MCF 10A (cell line): ENCODE measurements at regions of chr16 and their contacts with region 1.

Region 1: DNA sequence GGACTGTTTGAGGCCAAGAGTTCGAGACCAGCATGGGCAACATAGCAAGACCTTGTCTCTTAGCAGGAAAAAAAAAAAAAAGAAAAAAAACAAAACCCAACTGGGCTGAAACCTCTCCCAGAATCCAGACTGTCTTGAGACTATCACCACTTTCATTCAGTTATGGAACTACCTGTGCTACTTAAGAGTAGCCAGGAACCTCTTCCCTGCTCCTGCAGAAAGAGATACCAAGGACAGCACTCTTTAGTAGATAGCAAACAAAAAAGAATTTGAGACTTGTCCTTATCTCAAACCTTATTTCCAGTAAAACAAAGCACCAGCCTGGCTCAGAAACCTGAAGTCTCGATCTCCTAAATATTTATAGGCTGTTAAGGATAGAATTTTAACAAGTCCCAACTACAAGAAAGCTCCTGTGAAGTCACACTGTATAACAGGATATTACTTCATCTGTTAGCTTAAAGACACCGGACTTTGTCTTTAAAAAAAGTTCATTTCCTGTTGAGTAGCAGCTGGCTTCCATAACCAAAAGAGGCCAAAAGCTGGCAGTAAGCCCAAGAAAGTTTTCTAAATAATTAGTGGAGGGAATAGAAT is 5.1 kb downstream of the CDR2 start:
- DNase-seq: peak; percentile 30
- H3K4me3 Mint-ChIP-seq: no peak overlapping the region
- H3K27ac Mint-ChIP-seq: peak overlapping the region; percentile 33
- H3K4me1 Mint-ChIP-seq: peaks cover 35% of the 10 kb centered on the region
- H3K27me3 Mint-ChIP-seq: no peaks in the 10 kb centered on the region
- CTCF ChIP-seq: no peak

Region 2: DNA sequence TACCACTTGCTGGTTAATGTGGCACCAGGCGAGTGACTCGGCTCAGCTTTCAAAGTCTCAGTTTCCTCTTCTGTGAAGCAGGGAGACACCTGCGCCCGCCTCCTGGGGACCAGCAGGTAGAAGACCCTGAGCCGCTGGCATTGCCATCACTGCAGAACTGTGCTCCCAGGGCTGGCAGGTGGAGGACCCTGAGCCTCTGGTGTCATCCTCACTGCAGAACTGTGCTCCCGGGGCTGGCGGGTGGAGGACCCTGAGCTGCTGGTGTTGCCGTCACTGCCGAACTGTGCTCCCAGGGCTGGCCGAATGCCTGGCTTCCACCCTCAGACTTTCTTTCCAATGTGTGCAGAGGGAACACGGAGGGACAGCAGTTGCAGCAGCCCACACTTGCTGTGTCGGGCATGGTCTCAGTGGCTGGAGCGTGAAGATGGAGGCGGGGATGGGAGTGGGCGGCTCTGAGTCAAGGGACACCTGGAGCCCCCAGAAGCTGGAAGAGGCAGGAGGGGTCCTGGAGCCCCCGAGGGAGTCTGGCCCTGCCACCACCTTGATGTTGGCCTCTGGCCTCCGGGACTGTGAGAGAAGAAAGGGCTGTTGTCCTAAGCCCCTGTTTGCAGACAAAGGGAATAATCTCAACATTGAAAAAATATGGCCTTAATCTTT is 845.8 kb before region 1 on chr16:
- CTCF ChIA-PET with region 1: no interaction called
- POLR2A ChIA-PET with region 1: no interaction called
- intact Hi-C with region 1: no loop called
- DNase-seq: no peak
- H3K4me3 Mint-ChIP-seq: no peak overlapping the region
- H3K27ac Mint-ChIP-seq: no peak overlapping the region
- H3K4me1 Mint-ChIP-seq: no peaks in the 10 kb centered on the region
- H3K27me3 Mint-ChIP-seq: no peaks in the 10 kb centered on the region
- CTCF ChIP-seq: no peak

Region 3: GRCh38 chr16:21574381-21574780 is 794.9 kb before region 1 on chr16:
- CTCF ChIA-PET with region 1: no interaction called
- POLR2A ChIA-PET with region 1: no interaction called
- intact Hi-C with region 1: no loop called
- DNase-seq: no peak
- H3K4me3 Mint-ChIP-seq: no peak overlapping the region
- H3K27ac Mint-ChIP-seq: no peak overlapping the region
- H3K4me1 Mint-ChIP-seq: no peaks in the 10 kb centered on the region
- H3K27me3 Mint-ChIP-seq: peaks cover 20% of the 10 kb centered on the region
- CTCF ChIP-seq: no peak

Region 4: GRCh38 chr16:22217889-22218730 is 151.2 kb before region 1 on chr16:
- CTCF ChIA-PET with region 1: no interaction called
- POLR2A ChIA-PET with region 1: no interaction called
- intact Hi-C with region 1: no loop called
- DNase-seq: no peak
- H3K4me3 Mint-ChIP-seq: no peak overlapping the region
- H3K27ac Mint-ChIP-seq: no peak overlapping the region
- H3K4me1 Mint-ChIP-seq: peaks cover 19% of the 10 kb centered on the region
- H3K27me3 Mint-ChIP-seq: no peaks in the 10 kb centered on the region
- CTCF ChIP-seq: no peak

Region 5: GRCh38 chr16:22353191-22353919 is 16.0 kb before region 1 on chr16:
- CTCF ChIA-PET with region 1: interaction called, 7 read pairs
- POLR2A ChIA-PET with region 1: interaction called, 24 read pairs
- intact Hi-C with region 1: no loop called
- DNase-seq: peak; percentile 44
- H3K4me3 Mint-ChIP-seq: no peak overlapping the region
- H3K27ac Mint-ChIP-seq: no peak overlapping the region
- H3K4me1 Mint-ChIP-seq: peaks cover 31% of the 10 kb centered on the region
- H3K27me3 Mint-ChIP-seq: no peaks in the 10 kb centered on the region
- CTCF ChIP-seq: no peak

Region 6: GRCh38 chr16:22425036-22425801 is 55.9 kb after region 1 on chr16:
- CTCF ChIA-PET with region 1: no interaction called
- POLR2A ChIA-PET with region 1: no interaction called
- intact Hi-C with region 1: no loop called
- DNase-seq: no peak
- H3K4me3 Mint-ChIP-seq: no peak overlapping the region
- H3K27ac Mint-ChIP-seq: no peak overlapping the region
- H3K4me1 Mint-ChIP-seq: no peaks in the 10 kb centered on the region
- H3K27me3 Mint-ChIP-seq: no peaks in the 10 kb centered on the region
- CTCF ChIP-seq: no peak